ENCODE measurements at regions of chr22 and their contacts with region 1.

Region 1: DNA sequence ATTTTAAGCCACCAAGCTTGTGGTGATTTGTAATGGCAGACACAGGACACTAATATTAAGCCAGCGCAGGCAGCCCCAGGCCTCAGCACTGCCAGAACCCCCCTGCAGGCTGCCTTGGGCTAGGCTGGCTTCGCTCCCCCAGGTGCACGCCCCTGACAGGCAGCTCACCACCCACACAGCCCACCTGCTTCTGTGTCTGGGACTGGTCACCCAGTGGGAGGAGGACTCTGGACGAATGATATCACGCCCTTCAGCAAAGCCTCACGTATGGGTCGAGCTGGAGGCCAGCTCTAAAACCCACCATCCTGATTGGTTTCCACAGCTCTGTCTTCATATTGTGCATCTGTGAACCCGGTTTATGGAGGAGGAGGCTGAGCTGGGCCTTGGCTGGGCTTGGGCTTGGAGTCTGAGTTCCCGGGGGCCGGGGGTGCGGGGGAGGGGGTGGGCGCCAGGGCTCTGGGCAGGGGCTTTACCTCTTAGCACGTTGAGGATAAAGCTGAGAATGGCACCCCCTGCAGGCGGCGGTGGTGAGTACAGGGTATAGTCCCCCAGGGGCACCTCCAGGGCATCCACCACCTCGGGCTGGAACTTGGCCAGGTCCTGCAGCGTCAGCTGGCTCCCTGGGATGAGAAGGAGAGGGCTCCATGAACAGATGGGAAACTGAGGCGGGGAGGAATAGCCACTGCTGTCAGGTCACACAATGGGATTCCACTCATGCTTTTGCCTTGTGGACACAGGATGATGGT is 13.8 kb downstream of the GGT5 start:
- DNase-seq: peak; percentile 76
- CTCF ChIP-seq: peak; percentile 63

Region 2: GRCh38 chr22:24106385-24107381 is 124.4 kb before region 1 on chr22:
- CTCF ChIA-PET with region 1: no interaction called
- POLR2A ChIA-PET with region 1: no interaction called
- DNase-seq: peak; percentile 38
- CTCF ChIP-seq: peak; percentile 36

Region 3: GRCh38 chr22:24133187-24133965 is 97.7 kb before region 1 on chr22:
- CTCF ChIA-PET with region 1: no interaction called
- POLR2A ChIA-PET with region 1: no interaction called
- DNase-seq: no peak
- CTCF ChIP-seq: peak; percentile 43

Region 4: GRCh38 chr22:24181996-24182899 is 48.8 kb before region 1 on chr22:
- CTCF ChIA-PET with region 1: interaction called, 10 read pairs
- POLR2A ChIA-PET with region 1: no interaction called
- DNase-seq: no peak
- CTCF ChIP-seq: no peak

Region 5: GRCh38 chr22:24189249-24190158 is 41.6 kb before region 1 on chr22:
- CTCF ChIA-PET with region 1: interaction called, 22 read pairs
- POLR2A ChIA-PET with region 1: no interaction called
- DNase-seq: peak; percentile 87
- CTCF ChIP-seq: peak; percentile 77

Region 6: GRCh38 chr22:24214467-24215285 is 16.4 kb before region 1 on chr22:
- CTCF ChIA-PET with region 1: interaction called, 67 read pairs
- POLR2A ChIA-PET with region 1: no interaction called
- DNase-seq: no peak
- CTCF ChIP-seq: no peak

Region 7: GRCh38 chr22:24244101-24244787 is 13.2 kb after region 1 on chr22:
- CTCF ChIA-PET with region 1: interaction called, 19 read pairs
- POLR2A ChIA-PET with region 1: no interaction called
- DNase-seq: no peak
- CTCF ChIP-seq: no peak

Region 8: GRCh38 chr22:24379536-24379935 is 148.5 kb after region 1 on chr22:
- CTCF ChIA-PET with region 1: no interaction called
- POLR2A ChIA-PET with region 1: no interaction called
- DNase-seq: no peak
- CTCF ChIP-seq: no peak